Ovary (tissue), 10 donors: ENCODE measurements at regions of chr1 and their contacts with region 1.

Region 1: GRCh38 chr1:234599617-234600417 is 10.2 kb downstream of the IRF2BP2 start:
- DNase-seq: peak; percentile 85 to 92 (median 88)
- H3K4me3 ChIP-seq: peak overlapping the region; percentile 51
- H3K27ac ChIP-seq: peak overlapping the region; percentile 82 to 97
- H3K4me1 ChIP-seq: peaks cover 3% of the 10 kb centered on the region
- H3K27me3 ChIP-seq: no peaks in the 10 kb centered on the region
- CTCF ChIP-seq: peak in 1 of 3 donors; percentile 23
- EP300 ChIP-seq: peak; percentile 75
- POLR2A ChIP-seq: peak; percentile 57

Region 2: DNA sequence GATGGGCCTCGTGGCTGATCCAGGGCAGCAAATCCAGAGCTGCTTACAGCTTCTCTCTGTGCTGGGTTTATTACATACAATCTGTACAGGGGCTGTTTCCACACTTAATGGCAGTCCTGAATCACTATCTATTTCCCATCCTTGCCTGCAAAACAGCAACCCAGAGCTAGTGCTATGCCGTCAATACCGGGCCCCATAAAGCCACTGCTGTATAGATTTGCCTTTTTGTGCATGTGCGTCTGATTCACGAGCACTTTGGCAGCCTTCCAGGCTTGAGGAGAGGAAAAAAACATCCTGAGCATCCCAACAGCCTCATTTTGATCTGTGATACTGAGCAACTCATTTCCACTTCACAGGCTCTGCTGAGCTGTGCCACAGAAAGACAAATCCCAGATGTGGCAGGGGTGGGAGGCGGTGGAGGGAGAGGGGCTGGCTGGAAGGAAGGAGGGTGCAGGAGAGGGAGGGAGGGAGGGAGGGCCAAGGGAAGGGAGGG is 55.7 kb before region 1 on chr1:
- intact Hi-C with region 1: loop called in 1 of 4 experiments (anchors 10 kb)
- DNase-seq: peak; percentile 79 to 88 (median 86)
- H3K4me3 ChIP-seq: no peak overlapping the region
- H3K27ac ChIP-seq: peak overlapping the region; percentile 80 to 88
- H3K4me1 ChIP-seq: peaks cover 25% of the 10 kb centered on the region
- H3K27me3 ChIP-seq: no peaks in the 10 kb centered on the region
- CTCF ChIP-seq: no peak
- EP300 ChIP-seq: no peak
- POLR2A ChIP-seq: no peak

Region 3: GRCh38 chr1:234963180-234963903 is 363.5 kb after region 1 on chr1:
- intact Hi-C with region 1: loop called in 1 of 4 experiments (anchors 10 kb)
- DNase-seq: peak in 2 of 5 donors; percentile 54 to 71
- H3K4me3 ChIP-seq: no peak overlapping the region
- H3K27ac ChIP-seq: peak overlapping the region; percentile 53 to 60
- H3K4me1 ChIP-seq: peaks cover 9% of the 10 kb centered on the region
- H3K27me3 ChIP-seq: no peaks in the 10 kb centered on the region
- CTCF ChIP-seq: no peak
- EP300 ChIP-seq: no peak
- POLR2A ChIP-seq: no peak